ENCODE measurements at regions of chr1 and their contacts with region 1.

Region 1: DNA sequence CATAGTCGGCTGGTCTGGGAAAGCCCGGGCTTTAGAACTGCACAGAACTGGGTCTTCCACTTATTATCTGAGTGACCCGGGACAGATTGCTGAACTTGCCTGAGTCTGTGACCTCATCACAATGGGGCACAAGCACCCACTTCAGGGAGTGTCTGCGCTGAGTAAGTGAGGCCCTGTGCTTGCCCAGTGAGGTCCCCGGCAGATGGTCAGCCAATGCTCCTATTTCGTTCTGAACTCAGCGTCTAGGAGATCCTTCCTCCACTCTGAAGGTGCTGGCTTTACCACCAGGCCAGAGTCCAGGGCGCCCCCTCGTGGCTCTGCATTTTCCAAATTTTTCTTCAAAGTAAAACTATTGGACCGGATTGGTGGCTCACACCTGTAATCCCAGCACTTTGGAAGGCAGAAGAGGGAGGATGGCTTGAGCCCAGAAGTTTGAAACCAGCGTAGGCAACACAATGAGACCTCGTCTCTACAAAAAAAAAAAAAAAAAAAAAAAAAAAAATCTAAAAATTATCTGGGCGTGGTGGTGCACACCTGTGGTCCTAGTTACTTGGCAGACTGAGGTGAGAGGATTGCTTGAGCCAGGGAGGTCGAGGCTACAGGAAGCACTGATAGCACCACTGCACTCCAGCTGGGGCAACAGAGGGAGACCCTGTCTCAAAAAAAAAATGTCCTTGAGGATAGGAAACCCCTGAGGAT is 61.7 kb downstream of the FCRL5 start:
- DNase-seq: peak; percentile 83
- ATAC-seq: peak; percentile 67

Region 2: DNA sequence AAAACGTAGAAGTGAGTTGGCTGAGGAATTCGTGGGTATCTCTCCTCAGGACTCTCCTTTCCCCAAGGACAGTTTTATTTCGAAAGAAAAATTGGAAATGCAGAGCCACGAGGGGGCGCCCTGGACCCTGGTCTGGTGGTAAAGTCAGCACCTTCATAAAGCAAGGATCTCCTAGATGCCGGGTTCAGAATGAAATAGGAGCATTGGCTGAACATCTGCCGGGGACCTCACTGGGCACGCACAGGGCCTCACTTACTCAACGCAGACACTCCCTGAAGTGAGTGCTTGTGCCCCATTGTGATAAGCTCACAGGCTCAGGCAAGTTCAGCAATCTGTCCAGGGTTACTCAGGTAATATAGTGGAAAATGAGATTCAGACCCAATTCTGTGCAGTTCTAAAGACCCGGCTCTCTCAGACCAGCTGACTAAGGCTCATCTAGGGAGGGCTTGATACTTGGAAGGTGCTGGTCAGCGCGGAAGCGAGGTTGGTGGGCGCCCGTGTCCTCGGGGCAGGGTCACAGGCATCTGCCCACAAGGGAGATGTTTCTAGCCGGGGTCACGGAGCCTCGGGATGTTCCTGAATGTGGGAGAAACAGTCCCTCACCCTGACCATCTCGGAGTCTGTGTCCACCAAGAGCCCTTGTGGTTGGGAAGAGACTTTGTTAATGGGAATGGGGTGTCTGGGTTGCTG is 296.8 kb before region 1 on chr1:
- intact Hi-C with region 1: loop called (anchors 10 kb)
- DNase-seq: peak; percentile 77
- ATAC-seq: no peak

Region 3: GRCh38 chr1:157369808-157370521 is 120.7 kb before region 1 on chr1:
- intact Hi-C with region 1: loop called (anchors 10 kb)
- DNase-seq: no peak
- ATAC-seq: peak; percentile 72

Measured in sciatic nerve (tissue), 2 donors.